Naive thymus-derived CD4-positive, alpha-beta T cell (primary cell): ENCODE measurements at regions of chr1 and their contacts with region 1.

Region 1: GRCh38 chr1:231528172-231529029 is at the start of gene TSNAX:
- DNase-seq: peak; percentile 85 to 94 (median 92)
- ATAC-seq: peak; percentile 93
- H3K4me3 ChIP-seq: peak within 1 kb of the TSS; percentile 93
- H3K4me3 Mint-ChIP-seq: peak within 1 kb of the TSS; percentile 85 to 99 (median 97)
- H3K27ac ChIP-seq: peak within 1 kb of the TSS; percentile 86
- H3K27ac Mint-ChIP-seq: peak within 1 kb of the TSS; percentile 96 to 100 (median 99)
- H3K4me1 ChIP-seq: peaks cover 24 to 26% of the 10 kb centered on the region in 2 donors
- H3K4me1 Mint-ChIP-seq: peaks cover 23 to 55% (median 50%) of the 10 kb centered on the region in 7 donors
- H3K27me3 ChIP-seq: no peaks in the 10 kb centered on the region
- H3K27me3 Mint-ChIP-seq: no peaks in the 10 kb centered on the region
- total RNA-seq, gene TSNAX: 33.7 to 49.7 (median 34.3) TPM

Region 2: GRCh38 chr1:229625915-229626831 is 1902.2 kb before region 1 on chr1 and contains the starts of genes TAF5L and URB2:
- CTCF ChIA-PET with region 1: no interaction called
- POLR2A ChIA-PET with region 1: no interaction called
- intact Hi-C with region 1: loop called in 1 of 2 experiments (anchors 5 kb)
- DNase-seq: peak; percentile 81 to 91 (median 85)
- ATAC-seq: peak; percentile 97
- H3K4me3 ChIP-seq: peak within 1 kb of the TSS; percentile 93
- H3K4me3 Mint-ChIP-seq: peak within 1 kb of the TSS; percentile 94 to 100 (median 98)
- H3K27ac ChIP-seq: peak within 1 kb of the TSS; percentile 80
- H3K27ac Mint-ChIP-seq: peak within 1 kb of the TSS; percentile 93 to 98 (median 97)
- H3K4me1 ChIP-seq: peaks cover 21 to 27% of the 10 kb centered on the region in 2 donors
- H3K4me1 Mint-ChIP-seq: peaks cover 39 to 69% (median 59%) of the 10 kb centered on the region in 7 donors
- H3K27me3 ChIP-seq: no peaks in the 10 kb centered on the region
- H3K27me3 Mint-ChIP-seq: no peaks in the 10 kb centered on the region
- total RNA-seq, gene TAF5L: 17.3 to 27.2 (median 19.8) TPM
- total RNA-seq, gene URB2: 6.2 to 18.2 (median 11.0) TPM

Region 3: DNA sequence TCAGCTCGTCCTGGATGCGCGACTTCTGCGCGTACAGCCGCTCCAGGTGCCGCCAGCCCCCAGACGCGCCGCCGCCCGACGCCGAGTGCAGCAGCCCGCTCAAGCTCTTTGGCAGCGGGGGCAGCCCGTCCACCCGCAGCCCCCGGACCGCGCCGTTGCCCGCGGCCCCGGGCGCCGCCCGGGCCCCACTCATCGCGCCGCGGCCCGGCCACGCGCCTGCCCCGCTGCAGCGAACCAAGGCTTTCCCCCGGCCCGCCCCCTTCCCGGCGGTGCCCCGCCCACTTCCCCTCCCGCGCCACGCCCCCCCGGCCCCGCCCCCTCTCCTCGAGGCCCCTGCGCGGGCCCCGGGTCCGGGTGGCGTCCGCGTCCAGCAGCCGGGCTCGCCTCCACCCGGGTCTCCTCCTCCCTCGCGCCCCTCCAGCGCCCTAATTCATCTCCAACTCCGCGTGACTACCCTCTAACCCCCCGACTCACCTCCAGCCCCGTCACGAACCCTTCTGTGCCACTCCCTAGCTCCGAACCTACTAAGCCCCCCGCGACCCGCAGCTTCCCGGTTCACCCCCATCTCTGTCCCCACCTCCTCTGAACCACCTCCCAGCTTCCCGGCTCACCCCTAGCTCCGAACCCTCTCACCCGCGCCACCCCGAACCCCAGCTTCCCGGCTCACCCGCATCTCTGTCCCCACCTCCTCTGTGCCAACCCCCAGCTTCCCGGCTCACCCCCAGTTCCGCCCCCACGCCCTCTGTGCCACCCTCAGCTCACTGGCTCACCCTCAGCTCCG is 488.2 kb before region 1 on chr1 and contains the start of gene FAM89A:
- CTCF ChIA-PET with region 1: no interaction called
- POLR2A ChIA-PET with region 1: no interaction called
- intact Hi-C with region 1: loop called in 1 of 2 experiments (anchors 5 kb)
- DNase-seq: peak; percentile 44 to 79 (median 70)
- ATAC-seq: peak; percentile 91
- H3K4me3 ChIP-seq: peak within 1 kb of the TSS; percentile 67
- H3K4me3 Mint-ChIP-seq: peak within 1 kb of the TSS; percentile 81 to 90 (median 82)
- H3K27ac ChIP-seq: peak within 1 kb of the TSS; percentile 63
- H3K27ac Mint-ChIP-seq: peak within 1 kb of the TSS in 8 of 9 donors; percentile 36 to 83 (median 69)
- H3K4me1 ChIP-seq: peaks cover 10 to 13% of the 10 kb centered on the region in 2 donors
- H3K4me1 Mint-ChIP-seq: peaks cover 27 to 49% (median 36%) of the 10 kb centered on the region in 7 donors
- H3K27me3 ChIP-seq: no peaks in the 10 kb centered on the region
- H3K27me3 Mint-ChIP-seq: peaks cover 0 to 37% (median 0%) of the 10 kb centered on the region in 5 donors
- total RNA-seq, gene FAM89A: 4.5 to 9.0 (median 6.9) TPM

Region 4: GRCh38 chr1:231264642-231265041 is 263.8 kb before region 1 on chr1:
- CTCF ChIA-PET with region 1: no interaction called
- POLR2A ChIA-PET with region 1: no interaction called
- intact Hi-C with region 1: no loop called
- DNase-seq: no peak
- ATAC-seq: no peak
- H3K4me3 ChIP-seq: no peak overlapping the region
- H3K4me3 Mint-ChIP-seq: no peak overlapping the region
- H3K27ac ChIP-seq: no peak overlapping the region
- H3K27ac Mint-ChIP-seq: peak overlapping the region in 4 of 9 donors; percentile 12 to 65 (median 60)
- H3K4me1 ChIP-seq: no peaks in the 10 kb centered on the region
- H3K4me1 Mint-ChIP-seq: peaks cover 0 to 4% (median 0%) of the 10 kb centered on the region in 7 donors
- H3K27me3 ChIP-seq: no peaks in the 10 kb centered on the region
- H3K27me3 Mint-ChIP-seq: no peaks in the 10 kb centered on the region

Region 5: GRCh38 chr1:231337472-231338269 is 190.7 kb before region 1 on chr1 and contains the start of gene EXOC8:
- CTCF ChIA-PET with region 1: no interaction called
- POLR2A ChIA-PET with region 1: interaction called, 6 read pairs
- intact Hi-C with region 1: loop called (anchors 1 kb)
- DNase-seq: peak; percentile 95 to 100 (median 98)
- ATAC-seq: peak; percentile 86
- H3K4me3 ChIP-seq: peak within 1 kb of the TSS; percentile 99
- H3K4me3 Mint-ChIP-seq: peak within 1 kb of the TSS; percentile 97 to 100 (median 99)
- H3K27ac ChIP-seq: peak within 1 kb of the TSS; percentile 94
- H3K27ac Mint-ChIP-seq: peak within 1 kb of the TSS; percentile 96 to 100 (median 100)
- H3K4me1 ChIP-seq: peaks cover 41 to 51% of the 10 kb centered on the region in 2 donors
- H3K4me1 Mint-ChIP-seq: peaks cover 36 to 83% (median 67%) of the 10 kb centered on the region in 7 donors
- H3K27me3 ChIP-seq: no peaks in the 10 kb centered on the region
- H3K27me3 Mint-ChIP-seq: peaks cover 0 to 6% (median 0%) of the 10 kb centered on the region in 5 donors
- total RNA-seq, gene EXOC8: 21.9 to 33.8 (median 28.0) TPM

Region 6: GRCh38 chr1:231460614-231461013 is 67.8 kb before region 1 on chr1:
- CTCF ChIA-PET with region 1: no interaction called
- POLR2A ChIA-PET with region 1: no interaction called
- intact Hi-C with region 1: loop called (anchors 1 to 2 kb)
- DNase-seq: peak in 8 of 9 donors; percentile 43 to 71 (median 60)
- ATAC-seq: peak; percentile 93
- H3K4me3 ChIP-seq: no peak overlapping the region
- H3K4me3 Mint-ChIP-seq: peak overlapping the region in 3 of 10 donors; percentile 10 to 38 (median 16)
- H3K27ac ChIP-seq: no peak overlapping the region
- H3K27ac Mint-ChIP-seq: peak overlapping the region in 2 of 9 donors; percentile 5 to 71
- H3K4me1 ChIP-seq: peaks cover 8 to 18% of the 10 kb centered on the region in 2 donors
- H3K4me1 Mint-ChIP-seq: peaks cover 10 to 29% (median 16%) of the 10 kb centered on the region in 7 donors
- H3K27me3 ChIP-seq: peaks cover 12 to 13% of the 10 kb centered on the region in 2 donors
- H3K27me3 Mint-ChIP-seq: peaks cover 64 to 81% (median 71%) of the 10 kb centered on the region in 5 donors

Region 7: GRCh38 chr1:231584124-231584523 is 55.7 kb after region 1 on chr1:
- CTCF ChIA-PET with region 1: no interaction called
- POLR2A ChIA-PET with region 1: no interaction called
- intact Hi-C with region 1: no loop called
- DNase-seq: no peak
- ATAC-seq: no peak
- H3K4me3 ChIP-seq: no peak overlapping the region
- H3K4me3 Mint-ChIP-seq: no peak overlapping the region
- H3K27ac ChIP-seq: no peak overlapping the region
- H3K27ac Mint-ChIP-seq: no peak overlapping the region
- H3K4me1 ChIP-seq: no peaks in the 10 kb centered on the region
- H3K4me1 Mint-ChIP-seq: no peaks in the 10 kb centered on the region
- H3K27me3 ChIP-seq: no peaks in the 10 kb centered on the region
- H3K27me3 Mint-ChIP-seq: no peaks in the 10 kb centered on the region

Region 8: GRCh38 chr1:231626535-231626945 is 98.1 kb after region 1 on chr1 and contains the start of gene DISC1:
- CTCF ChIA-PET with region 1: no interaction called
- POLR2A ChIA-PET with region 1: no interaction called
- intact Hi-C with region 1: loop called (anchors 1 to 2 kb)
- DNase-seq: peak; percentile 49 to 74 (median 70)
- ATAC-seq: peak; percentile 88
- H3K4me3 ChIP-seq: peak within 1 kb of the TSS; percentile 74
- H3K4me3 Mint-ChIP-seq: peak within 1 kb of the TSS; percentile 88 to 98 (median 94)
- H3K27ac ChIP-seq: peak within 1 kb of the TSS; percentile 60
- H3K27ac Mint-ChIP-seq: peak within 1 kb of the TSS; percentile 77 to 97 (median 92)
- H3K4me1 ChIP-seq: peaks cover 8 to 16% of the 10 kb centered on the region in 2 donors
- H3K4me1 Mint-ChIP-seq: peaks cover 17 to 52% (median 38%) of the 10 kb centered on the region in 7 donors
- H3K27me3 ChIP-seq: no peaks in the 10 kb centered on the region
- H3K27me3 Mint-ChIP-seq: peaks cover 0 to 36% (median 0%) of the 10 kb centered on the region in 5 donors
- total RNA-seq, gene DISC1: 17.1 to 33.8 (median 23.5) TPM